Aorta (tissue), 5 donors: ENCODE measurements at regions of chr11 and their contacts with region 1.

Region 1: GRCh38 chr11:94417386-94417987 is 16.3 kb upstream of the GPR83 start:
- DNase-seq: no peak
- ATAC-seq: no peak
- H3K4me3 ChIP-seq: no peak overlapping the region
- H3K27ac ChIP-seq: no peak overlapping the region
- H3K4me1 ChIP-seq: no peaks in the 10 kb centered on the region
- H3K27me3 ChIP-seq: no peaks in the 10 kb centered on the region

Region 2: DNA sequence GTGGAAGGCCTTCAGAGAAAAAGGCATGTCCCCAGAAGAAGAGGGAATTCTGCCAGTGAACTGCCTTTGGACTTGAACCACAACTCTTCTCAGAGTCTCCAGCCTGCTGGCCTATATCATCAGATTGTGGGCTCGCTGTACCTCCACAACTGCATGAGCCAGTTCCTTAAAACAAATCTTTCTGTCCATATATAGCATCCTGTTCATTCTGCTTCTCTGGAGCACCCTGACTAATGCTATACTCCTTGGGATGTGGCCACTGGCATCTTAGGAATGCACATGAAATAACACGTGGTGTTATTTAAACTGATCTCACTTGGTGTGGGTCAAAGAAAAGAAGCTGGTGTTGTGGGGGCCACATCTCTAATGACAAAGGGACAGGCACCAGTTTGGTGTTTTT is 508.8 kb before region 1 on chr11:
- intact Hi-C with region 1: no loop called
- DNase-seq: no peak
- ATAC-seq: no peak
- H3K4me3 ChIP-seq: no peak overlapping the region
- H3K27ac ChIP-seq: peak overlapping the region in 1 of 2 donors; percentile 66
- H3K4me1 ChIP-seq: no peaks in the 10 kb centered on the region
- H3K27me3 ChIP-seq: no peaks in the 10 kb centered on the region

Region 3: DNA sequence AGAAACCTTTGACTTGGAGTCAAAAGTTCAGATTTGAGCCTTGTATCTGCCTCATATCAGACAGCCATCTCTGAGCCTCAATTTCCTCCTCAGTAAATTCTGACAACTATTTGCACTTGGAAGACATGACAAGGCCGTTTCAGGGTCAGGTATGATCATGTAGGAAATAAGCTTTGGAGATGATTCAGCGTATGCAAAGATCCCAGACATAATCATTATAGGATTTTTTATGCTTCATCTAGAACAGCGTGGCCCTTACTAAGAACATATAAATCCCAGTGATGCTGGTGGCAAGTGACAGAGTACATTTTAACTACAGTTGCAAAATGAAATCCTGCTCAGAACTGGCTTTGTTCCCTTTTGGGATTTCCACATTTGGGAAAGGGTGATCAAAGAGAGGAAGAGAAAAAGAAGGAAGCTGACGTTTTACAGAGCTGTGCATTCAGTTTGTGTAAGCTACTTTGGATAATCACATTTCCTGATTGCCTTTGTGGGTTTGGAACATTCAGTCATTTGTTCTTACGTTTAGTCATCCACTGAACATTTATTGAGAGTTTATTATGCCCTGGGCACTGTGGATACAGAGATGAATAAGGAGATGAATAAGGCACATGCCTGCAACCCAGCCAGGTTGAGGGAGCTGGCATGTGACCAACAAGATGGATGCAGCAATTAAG is 478.3 kb before region 1 on chr11:
- intact Hi-C with region 1: no loop called
- DNase-seq: no peak
- ATAC-seq: no peak
- H3K4me3 ChIP-seq: no peak overlapping the region
- H3K27ac ChIP-seq: no peak overlapping the region
- H3K4me1 ChIP-seq: no peaks in the 10 kb centered on the region
- H3K27me3 ChIP-seq: peaks cover 0 to 2% of the 10 kb centered on the region in 2 donors

Region 4: DNA sequence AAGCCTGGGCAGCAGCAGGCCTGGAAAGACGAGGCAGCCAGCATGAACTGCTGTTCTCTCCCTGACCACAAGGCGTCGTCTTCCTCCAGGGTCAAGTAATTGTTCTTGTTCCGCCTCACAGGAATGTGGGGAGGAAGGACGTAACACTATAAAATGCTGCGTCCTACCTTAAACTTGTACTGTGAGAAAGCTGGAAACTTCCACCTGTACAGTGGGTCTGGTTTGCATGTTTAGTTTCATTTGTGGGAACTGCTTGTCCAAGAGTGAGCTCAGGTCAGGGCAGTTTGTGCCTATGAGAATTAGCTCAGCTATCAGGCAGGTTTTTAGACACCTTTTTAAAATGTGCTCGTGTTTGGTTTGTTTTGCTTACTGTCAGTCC is 233.6 kb before region 1 on chr11:
- intact Hi-C with region 1: loop called in 1 of 2 experiments (anchors 5 kb)
- DNase-seq: peak; percentile 71 to 85
- ATAC-seq: peak; percentile 78
- H3K4me3 ChIP-seq: no peak overlapping the region
- H3K27ac ChIP-seq: peak overlapping the region in 1 of 2 donors; percentile 45
- H3K4me1 ChIP-seq: peaks cover 2 to 4% of the 10 kb centered on the region in 2 donors
- H3K27me3 ChIP-seq: no peaks in the 10 kb centered on the region

Region 5: DNA sequence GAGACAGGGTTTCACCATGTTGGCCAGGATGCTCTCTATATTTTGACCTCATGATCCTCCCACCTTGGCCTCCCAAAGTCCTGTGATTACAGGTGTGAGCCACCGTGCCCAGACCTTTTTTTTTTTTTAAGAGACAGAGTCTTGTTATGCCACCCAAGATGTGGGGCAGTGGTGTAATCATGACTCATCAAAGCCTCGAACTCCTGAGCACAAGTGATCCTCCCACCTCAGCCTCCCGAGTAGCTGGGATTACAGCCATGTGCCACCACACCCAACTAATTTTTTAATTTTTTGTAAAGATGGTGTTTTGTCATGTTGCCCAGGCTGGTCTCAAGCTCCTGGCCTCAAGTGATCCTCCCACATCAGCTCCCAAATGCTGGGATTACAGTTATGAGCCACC is 75.2 kb before region 1 on chr11:
- intact Hi-C with region 1: no loop called
- DNase-seq: no peak
- ATAC-seq: no peak
- H3K4me3 ChIP-seq: no peak overlapping the region
- H3K27ac ChIP-seq: no peak overlapping the region
- H3K4me1 ChIP-seq: no peaks in the 10 kb centered on the region
- H3K27me3 ChIP-seq: no peaks in the 10 kb centered on the region

Region 6: GRCh38 chr11:94402355-94402754 is 15.1 kb before region 1 on chr11:
- intact Hi-C with region 1: no loop called
- DNase-seq: no peak
- ATAC-seq: no peak
- H3K4me3 ChIP-seq: no peak overlapping the region
- H3K27ac ChIP-seq: no peak overlapping the region
- H3K4me1 ChIP-seq: no peaks in the 10 kb centered on the region
- H3K27me3 ChIP-seq: no peaks in the 10 kb centered on the region